ENCODE measurements at regions of chr4 and their contacts with region 1.

Region 1: DNA sequence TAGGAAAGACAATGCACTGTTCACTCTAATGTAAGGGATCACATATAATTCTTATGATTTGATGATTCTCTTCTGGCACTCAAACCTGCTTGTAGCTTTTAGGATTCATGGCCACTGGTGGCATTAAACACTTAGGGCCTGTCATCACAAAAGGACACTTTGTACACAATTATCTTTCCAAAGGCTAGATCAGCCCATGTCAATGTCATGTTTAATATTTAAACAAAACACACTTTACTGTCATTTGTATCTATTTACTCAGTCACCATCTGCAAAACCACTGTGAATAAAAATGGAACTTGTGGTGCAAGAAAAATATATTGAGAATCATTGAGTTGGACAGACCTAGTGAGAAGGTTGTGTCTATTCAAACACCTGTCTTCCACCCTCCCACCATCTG is 83.6 kb upstream of the TTC29 start:
- DNase-seq: no peak
- H3K4me3 ChIP-seq: no peak overlapping the region
- H3K27ac ChIP-seq: no peak overlapping the region
- H3K4me1 ChIP-seq: no peaks in the 10 kb centered on the region
- H3K27me3 ChIP-seq: no peaks in the 10 kb centered on the region
- CTCF ChIP-seq: no peak
- POLR2A ChIP-seq: no peak

Region 2: GRCh38 chr4:147096667-147097604 is 67.6 kb after region 1 on chr4:
- intact Hi-C with region 1: loop called (anchors 10 kb)
- DNase-seq: no peak
- H3K4me3 ChIP-seq: no peak overlapping the region
- H3K27ac ChIP-seq: no peak overlapping the region
- H3K4me1 ChIP-seq: no peaks in the 10 kb centered on the region
- H3K27me3 ChIP-seq: no peaks in the 10 kb centered on the region
- CTCF ChIP-seq: peak; percentile 60 to 77 (median 68)
- POLR2A ChIP-seq: no peak

Region 3: DNA sequence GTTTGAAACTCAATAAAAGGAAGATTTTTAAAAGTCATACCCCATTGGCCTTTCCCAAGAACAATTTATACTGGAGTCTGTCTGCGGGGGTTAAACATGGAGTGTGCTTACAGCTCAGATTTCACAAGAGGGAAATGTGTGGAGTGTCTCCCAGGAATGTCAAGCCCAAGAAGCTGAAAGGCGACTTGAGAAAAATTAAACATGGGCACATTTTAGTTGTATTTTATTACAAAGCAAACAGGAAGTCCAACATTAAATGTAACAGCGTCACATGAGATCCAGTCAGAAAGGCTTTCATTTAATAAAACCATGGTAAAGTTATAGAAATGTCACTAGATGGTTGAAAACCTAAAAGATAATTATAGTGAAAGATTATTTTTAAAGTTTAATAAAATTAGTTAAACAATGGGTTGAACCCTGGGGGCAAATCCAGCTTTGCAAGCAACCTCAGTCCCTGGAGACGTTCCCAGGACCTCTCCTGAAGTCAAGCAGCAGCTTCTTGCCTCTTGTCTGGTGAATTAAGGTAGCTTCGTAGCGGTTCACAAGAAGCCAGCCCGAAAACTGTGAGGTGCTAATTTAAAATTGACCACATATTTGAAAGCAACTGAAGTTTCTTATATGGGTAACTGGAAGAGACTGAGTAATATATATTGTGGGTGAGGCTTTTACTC is 283.2 kb after region 1 on chr4:
- intact Hi-C with region 1: no loop called
- DNase-seq: no peak
- H3K4me3 ChIP-seq: no peak overlapping the region
- H3K27ac ChIP-seq: peak overlapping the region in 1 of 2 donors; percentile 41
- H3K4me1 ChIP-seq: no peaks in the 10 kb centered on the region
- H3K27me3 ChIP-seq: no peaks in the 10 kb centered on the region
- CTCF ChIP-seq: no peak
- POLR2A ChIP-seq: no peak